ENCODE measurements at regions of chr10 and their contacts with region 1.

Region 1: DNA sequence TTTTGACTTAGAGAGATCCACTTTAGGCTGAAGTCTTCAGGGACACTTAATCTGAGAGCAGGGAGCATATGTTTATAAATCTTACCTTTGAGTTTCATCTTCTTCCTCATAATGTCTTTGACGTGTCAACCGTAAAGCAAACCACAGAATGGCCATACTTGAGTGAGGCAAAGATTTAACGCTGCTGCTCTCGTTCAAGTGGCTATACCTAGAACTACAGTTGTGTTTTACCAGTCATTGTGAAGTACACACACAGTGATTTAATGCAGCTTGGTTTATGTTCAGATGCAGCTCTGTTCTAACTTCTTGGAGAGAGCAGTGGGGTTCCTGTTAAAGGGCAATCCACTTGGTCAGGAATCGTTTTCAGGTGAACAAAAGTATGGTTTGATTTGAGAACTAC is 39.9 kb upstream of the GOT1 start:
- DNase-seq: no peak
- H3K4me3 ChIP-seq: no peak overlapping the region
- H3K27ac ChIP-seq: no peak overlapping the region
- H3K4me1 ChIP-seq: peaks cover 0 to 7% (median 0%) of the 10 kb centered on the region in 4 donors
- H3K27me3 ChIP-seq: peaks cover 16% of the 10 kb centered on the region
- CTCF ChIP-seq: no peak
- EP300 ChIP-seq: no peak
- POLR2A ChIP-seq: no peak

Region 2: DNA sequence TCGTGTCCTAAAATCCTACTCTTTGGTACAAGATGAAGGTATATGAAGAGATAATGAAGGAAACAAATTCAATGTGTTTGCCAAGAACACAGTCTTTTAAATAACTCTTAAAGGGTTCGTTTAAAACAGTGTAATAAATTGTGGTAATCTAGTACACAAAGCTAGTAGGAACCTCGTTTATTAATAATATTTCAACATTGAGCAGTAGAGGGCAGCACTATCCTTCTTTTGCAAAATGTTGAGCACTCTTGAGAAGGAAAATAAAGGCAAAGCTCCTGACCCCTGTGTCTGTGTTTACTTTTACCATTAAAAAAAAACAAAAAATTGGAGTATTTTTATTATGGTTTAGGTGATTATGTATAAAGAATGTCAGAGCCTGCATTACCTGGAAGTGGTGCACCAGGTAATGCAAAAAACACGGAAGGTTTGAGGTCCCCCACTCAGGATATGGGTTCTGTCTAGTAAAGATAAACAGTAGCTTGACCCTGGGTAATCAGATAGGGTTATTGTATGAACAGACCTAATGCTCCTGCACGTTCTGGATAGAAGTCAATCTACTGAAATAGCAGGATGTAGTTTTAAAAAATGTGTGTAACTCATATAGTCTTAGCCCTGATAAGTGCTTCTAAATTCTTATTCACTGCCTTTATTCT is 34.2 kb before region 1 on chr10:
- in situ Hi-C with region 1: no loop called
- intact Hi-C with region 1: loop called (anchors 1 kb)
- DNase-seq: no peak
- H3K4me3 ChIP-seq: no peak overlapping the region
- H3K27ac ChIP-seq: peak overlapping the region; percentile 48 to 56 (median 54)
- H3K4me1 ChIP-seq: peaks cover 4 to 46% (median 15%) of the 10 kb centered on the region in 4 donors
- H3K27me3 ChIP-seq: no peaks in the 10 kb centered on the region
- CTCF ChIP-seq: peak; percentile 43 to 55 (median 50)
- EP300 ChIP-seq: no peak
- POLR2A ChIP-seq: no peak

Measured in transverse colon (tissue), 4 donors.